A549 (cell line): ENCODE measurements at regions of chr2 and their contacts with region 1.

Region 1: DNA sequence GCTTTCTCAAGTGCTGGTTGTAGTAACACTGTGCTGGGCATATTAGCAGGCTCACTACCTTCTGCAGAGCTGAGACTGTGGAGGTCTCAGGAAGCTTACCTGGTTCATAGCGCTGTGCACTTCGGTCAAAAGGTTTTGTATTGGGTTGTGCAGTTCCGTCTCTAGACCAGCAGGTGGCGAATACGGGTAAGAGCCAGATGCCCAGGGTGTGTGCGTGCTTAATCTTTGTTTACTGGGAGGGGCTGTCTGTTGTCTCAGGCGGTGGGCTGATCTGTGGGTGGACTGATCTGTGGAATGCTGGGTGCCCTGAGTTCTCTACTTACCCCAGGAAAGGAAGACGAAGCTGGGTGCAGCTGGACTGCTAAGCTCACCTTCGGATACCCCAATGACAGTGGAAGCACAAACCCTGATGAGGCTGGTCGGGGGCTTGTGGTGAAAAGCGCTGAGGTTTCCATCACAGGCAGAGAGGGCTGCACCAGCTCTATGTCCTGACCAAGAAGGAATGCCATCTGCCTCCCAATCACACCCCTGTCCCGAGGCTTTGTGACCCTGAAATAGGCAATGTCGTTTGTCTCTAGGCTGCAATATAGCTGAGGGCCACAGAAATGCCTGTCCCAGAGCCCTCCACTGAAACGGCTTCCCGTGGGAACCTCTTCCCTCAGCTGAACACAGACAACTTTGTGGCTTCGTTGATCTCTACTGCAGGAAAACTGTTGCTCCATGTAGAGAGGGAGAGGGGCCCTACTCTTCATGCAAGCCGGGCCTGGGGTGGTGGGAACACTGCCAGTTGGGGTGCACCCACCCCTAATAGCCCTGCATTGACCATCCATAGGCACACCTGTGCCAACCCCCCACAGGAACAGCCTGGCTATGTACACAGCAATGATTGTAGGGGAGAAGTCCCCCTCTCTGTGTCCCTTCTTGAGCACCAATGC is 45.9 kb upstream of the FAM117B start:
- DNase-seq: peak; percentile 59 to 76
- ATAC-seq: peak; percentile 95 to 96
- H3K4me3 ChIP-seq: no peak overlapping the region
- H3K27ac ChIP-seq: peak overlapping the region in 1 of 2 experiments; percentile 65; a peak in 2 of 6 replicates
- H3K4me1 ChIP-seq: 0 out of 3 replicates have a peak, but pooled peaks cover 2% of the 10 kb centered on the region
- CTCF ChIP-seq: peak; percentile 86
- EP300 ChIP-seq: no peak
- POLR2A ChIP-seq: no peak
- RAD21 ChIP-seq: peak; percentile 82 to 84

Region 2: DNA sequence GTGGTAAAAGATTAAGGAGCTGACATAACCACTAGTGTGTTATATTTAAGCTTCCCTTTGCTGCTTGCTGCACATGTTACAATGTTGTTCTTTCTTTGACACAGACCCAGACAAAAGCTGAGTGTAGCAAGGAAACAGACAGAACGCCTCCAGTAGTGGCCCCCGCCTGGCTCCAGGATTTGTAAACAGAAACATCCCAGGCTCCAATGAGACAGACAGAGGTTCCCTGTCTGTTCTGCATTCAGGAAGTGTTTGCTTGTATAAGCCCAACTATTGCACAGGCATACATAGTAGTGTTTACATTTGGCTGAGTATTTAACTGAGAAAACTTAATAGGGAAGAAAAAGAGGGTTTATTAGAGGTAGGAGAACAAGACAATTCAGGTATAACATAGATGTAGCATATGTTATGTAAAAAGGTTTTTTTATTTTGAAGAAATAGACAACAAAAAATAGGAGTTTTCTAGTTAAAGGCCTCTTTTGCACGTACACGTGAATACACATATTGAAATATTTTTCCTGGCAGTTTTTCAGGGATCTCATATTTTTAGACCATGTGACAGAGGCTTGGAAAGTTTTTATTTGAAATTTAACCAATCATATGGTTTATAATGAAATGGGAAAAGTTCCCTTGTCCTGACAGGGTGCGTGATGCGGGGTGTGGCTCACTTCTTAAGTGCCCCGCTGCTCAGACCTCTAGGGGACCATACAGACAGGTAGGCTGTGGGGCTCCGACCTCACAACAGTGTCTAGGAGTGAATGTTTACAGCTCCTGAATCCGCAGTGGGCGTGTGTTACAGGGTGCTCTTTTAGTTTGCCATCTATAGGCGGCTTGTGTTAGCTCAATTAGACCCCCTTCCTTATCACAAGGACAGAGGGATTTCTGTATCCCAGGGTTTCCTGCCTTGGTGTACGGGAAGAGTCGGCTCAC is 94.3 kb before region 1 on chr2:
- CTCF ChIA-PET with region 1: no interaction called
- POLR2A ChIA-PET with region 1: no interaction called
- DNase-seq: peak in 1 of 2 experiments; percentile 54
- ATAC-seq: peak; percentile 39 to 93; a peak in 5 of 6 replicates
- H3K4me3 ChIP-seq: no peak overlapping the region
- H3K27ac ChIP-seq: no peak overlapping the region
- H3K4me1 ChIP-seq: peaks cover 13% of the 10 kb centered on the region
- CTCF ChIP-seq: no peak
- EP300 ChIP-seq: no peak
- POLR2A ChIP-seq: no peak
- RAD21 ChIP-seq: no peak

Region 3: DNA sequence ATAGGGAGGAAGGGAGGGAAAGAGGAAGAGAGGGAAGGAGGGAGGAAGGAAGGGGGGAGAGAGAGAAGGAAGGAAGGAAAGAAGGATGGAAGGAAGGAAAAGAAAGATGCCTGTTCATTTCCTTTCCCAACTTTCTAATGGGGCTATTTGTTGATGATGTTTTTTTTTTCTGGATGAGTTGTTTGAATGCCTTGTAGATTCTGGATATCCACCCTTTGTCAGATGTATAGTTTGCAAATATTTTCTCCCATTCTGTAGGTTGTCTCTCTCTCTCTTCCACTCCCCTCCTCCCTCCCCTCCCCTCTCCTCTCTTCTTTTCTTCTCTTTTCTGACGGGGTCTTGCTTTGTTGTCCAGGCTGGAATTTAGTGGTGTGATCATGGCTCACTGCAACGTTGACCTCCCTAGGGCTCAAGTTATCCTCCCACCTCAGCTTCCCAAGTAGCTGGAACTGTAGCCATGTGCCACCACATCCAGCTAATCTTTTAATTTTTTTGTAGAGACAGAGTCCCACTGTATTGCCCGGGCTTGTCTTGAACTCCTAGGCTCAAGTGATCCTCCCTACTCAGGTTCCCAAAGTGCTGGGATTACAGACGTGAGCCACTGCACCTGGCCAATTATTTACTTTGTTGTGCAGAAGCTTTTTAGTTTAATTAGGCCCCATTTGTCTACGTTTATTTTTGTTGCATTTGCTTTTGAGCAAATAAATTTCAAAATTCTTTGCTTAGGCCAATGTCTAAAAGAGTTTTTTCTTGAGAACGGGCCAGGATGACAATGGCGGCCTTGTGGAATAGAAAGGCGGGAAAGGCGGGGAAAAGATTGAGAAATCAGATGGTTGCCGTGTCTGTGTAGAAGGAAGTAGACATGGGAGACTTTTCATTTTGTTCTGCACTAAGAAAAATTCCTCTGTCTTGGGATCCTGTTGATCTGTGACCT is 11.4 kb before region 1 on chr2:
- CTCF ChIA-PET with region 1: interaction called, 12 read pairs
- POLR2A ChIA-PET with region 1: no interaction called
- DNase-seq: no peak
- ATAC-seq: no peak
- H3K4me3 ChIP-seq: no peak overlapping the region
- H3K27ac ChIP-seq: no peak overlapping the region
- H3K4me1 ChIP-seq: no peaks in the 10 kb centered on the region
- CTCF ChIP-seq: no peak
- EP300 ChIP-seq: no peak
- POLR2A ChIP-seq: no peak
- RAD21 ChIP-seq: no peak

Region 4: DNA sequence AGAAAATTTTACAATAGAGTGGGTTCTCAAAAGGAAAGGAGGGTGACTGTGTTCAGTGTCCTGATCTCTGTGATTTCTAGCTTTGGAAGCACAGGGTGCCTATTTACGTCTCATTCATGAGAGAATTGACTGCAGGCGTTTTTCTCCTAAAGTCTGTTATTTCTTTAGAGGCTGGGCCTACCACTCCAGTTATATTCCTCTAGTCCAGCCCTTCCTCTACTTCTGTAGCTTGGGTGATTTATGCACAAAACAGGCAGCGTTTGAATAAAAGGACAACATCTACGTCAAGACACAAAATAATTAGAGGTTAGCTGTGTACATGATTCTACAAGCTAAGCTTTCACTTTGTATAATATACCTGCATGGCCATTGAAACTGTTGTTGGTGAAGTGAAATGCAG is 13.4 kb after region 1 on chr2:
- CTCF ChIA-PET with region 1: interaction called, 37 read pairs
- POLR2A ChIA-PET with region 1: no interaction called
- DNase-seq: no peak
- ATAC-seq: no peak
- H3K4me3 ChIP-seq: no peak overlapping the region
- H3K27ac ChIP-seq: no peak overlapping the region
- H3K4me1 ChIP-seq: no peaks in the 10 kb centered on the region
- CTCF ChIP-seq: no peak
- EP300 ChIP-seq: no peak
- POLR2A ChIP-seq: no peak
- RAD21 ChIP-seq: no peak

Region 5: GRCh38 chr2:202628646-202629198 is 39.8 kb after region 1 on chr2:
- CTCF ChIA-PET with region 1: interaction called, 11 read pairs
- POLR2A ChIA-PET with region 1: no interaction called
- DNase-seq: no peak
- ATAC-seq: no peak
- H3K4me3 ChIP-seq: no peak overlapping the region
- H3K27ac ChIP-seq: no peak overlapping the region
- H3K4me1 ChIP-seq: no peaks in the 10 kb centered on the region
- CTCF ChIP-seq: no peak
- EP300 ChIP-seq: no peak
- POLR2A ChIP-seq: no peak
- RAD21 ChIP-seq: no peak

Region 6: GRCh38 chr2:202831242-202832220 is 242.6 kb after region 1 on chr2:
- CTCF ChIA-PET with region 1: interaction called, 10 read pairs
- POLR2A ChIA-PET with region 1: no interaction called
- DNase-seq: peak; percentile 52 to 72
- ATAC-seq: peak; percentile 99
- H3K4me3 ChIP-seq: no peak overlapping the region
- H3K27ac ChIP-seq: 0 out of 6 replicates have a peak overlapping the region, but pooled peaks of 1 of the 2 experiments have one; percentile 29
- H3K4me1 ChIP-seq: peaks cover 9% of the 10 kb centered on the region
- CTCF ChIP-seq: peak; percentile 91
- EP300 ChIP-seq: no peak
- POLR2A ChIP-seq: no peak
- RAD21 ChIP-seq: peak; percentile 92 to 96

Region 7: GRCh38 chr2:202870431-202871299 is 281.8 kb after region 1 on chr2:
- CTCF ChIA-PET with region 1: interaction called, 18 read pairs
- POLR2A ChIA-PET with region 1: interaction called, 3 read pairs
- DNase-seq: peak; percentile 57 to 83
- ATAC-seq: peak; percentile 88 to 89
- H3K4me3 ChIP-seq: peak overlapping the region; percentile 72
- H3K27ac ChIP-seq: peak overlapping the region; percentile 77 to 94
- H3K4me1 ChIP-seq: peaks cover 6% of the 10 kb centered on the region; the same call in 2 of the 3 replicates
- CTCF ChIP-seq: peak; percentile 56
- EP300 ChIP-seq: no peak
- POLR2A ChIP-seq: peak; percentile 14; the same call in 1 of the 2 replicates
- RAD21 ChIP-seq: peak; percentile 55 to 58; a peak in 4 of 5 replicates